MCF 10A (cell line): ENCODE measurements at regions of chr3 and their contacts with region 1.

Region 1: DNA sequence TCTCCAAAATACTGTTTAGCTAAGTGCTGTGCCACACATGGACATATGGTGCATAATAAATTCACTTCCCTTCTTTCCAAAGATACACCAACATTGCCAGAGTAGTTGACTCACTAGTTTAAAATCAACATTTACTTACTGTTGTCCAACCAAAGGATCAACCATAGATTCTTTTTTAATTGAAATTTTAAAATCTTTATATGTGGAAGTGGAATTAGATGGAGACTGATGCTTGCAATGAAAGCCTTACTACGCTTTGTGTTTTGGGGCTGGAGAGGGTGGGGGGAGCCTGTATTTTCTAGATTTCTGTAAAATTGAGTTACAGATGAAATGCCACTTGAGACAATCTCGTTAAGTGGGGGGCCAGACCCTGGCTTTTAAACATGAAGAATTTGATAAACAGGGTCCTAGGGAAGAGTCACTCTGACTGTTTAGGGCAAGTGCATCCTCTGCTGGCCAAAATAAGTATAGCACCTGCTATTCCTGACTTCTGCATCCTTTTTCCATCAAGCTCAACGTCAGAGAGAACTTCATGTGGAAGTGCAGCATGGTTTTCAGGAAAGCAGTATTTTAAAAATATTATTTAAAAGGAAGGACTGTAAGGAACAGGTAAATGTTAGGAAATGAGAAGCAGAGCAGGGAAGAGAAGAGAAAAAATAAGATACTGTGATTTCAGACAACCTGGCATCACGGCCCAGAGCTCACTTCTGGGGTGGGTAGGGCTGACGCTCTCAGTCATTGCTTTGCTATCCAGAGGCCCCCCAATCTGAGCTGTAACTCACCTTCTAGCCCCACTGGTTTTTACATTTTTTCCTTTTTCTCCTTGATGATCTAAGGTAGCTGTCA is 76.7 kb downstream of the BOC start:
- DNase-seq: peak; percentile 73
- H3K4me3 Mint-ChIP-seq: no peak overlapping the region
- H3K27ac Mint-ChIP-seq: no peak overlapping the region
- H3K4me1 Mint-ChIP-seq: peaks cover 9% of the 10 kb centered on the region
- H3K27me3 Mint-ChIP-seq: no peaks in the 10 kb centered on the region
- CTCF ChIP-seq: peak; percentile 97

Region 2: GRCh38 chr3:112871735-112872134 is 416.3 kb before region 1 on chr3:
- CTCF ChIA-PET with region 1: no interaction called
- POLR2A ChIA-PET with region 1: no interaction called
- intact Hi-C with region 1: no loop called
- DNase-seq: no peak
- H3K4me3 Mint-ChIP-seq: no peak overlapping the region
- H3K27ac Mint-ChIP-seq: no peak overlapping the region
- H3K4me1 Mint-ChIP-seq: no peaks in the 10 kb centered on the region
- H3K27me3 Mint-ChIP-seq: peaks cover 24% of the 10 kb centered on the region
- CTCF ChIP-seq: no peak

Region 3: GRCh38 chr3:113051302-113051711 is 236.7 kb before region 1 on chr3:
- CTCF ChIA-PET with region 1: interaction called, 104 read pairs
- POLR2A ChIA-PET with region 1: interaction called, 4 read pairs
- intact Hi-C with region 1: loop called (anchors 1 kb)
- DNase-seq: peak; percentile 80
- H3K4me3 Mint-ChIP-seq: no peak overlapping the region
- H3K27ac Mint-ChIP-seq: no peak overlapping the region
- H3K4me1 Mint-ChIP-seq: no peaks in the 10 kb centered on the region
- H3K27me3 Mint-ChIP-seq: no peaks in the 10 kb centered on the region
- CTCF ChIP-seq: peak; percentile 85

Region 4: GRCh38 chr3:113136071-113136470 is 152.0 kb before region 1 on chr3:
- CTCF ChIA-PET with region 1: interaction called, 82 read pairs
- POLR2A ChIA-PET with region 1: interaction called, 3 read pairs
- intact Hi-C with region 1: loop called (anchors 1 kb)
- DNase-seq: peak; percentile 53
- H3K4me3 Mint-ChIP-seq: no peak overlapping the region
- H3K27ac Mint-ChIP-seq: no peak overlapping the region
- H3K4me1 Mint-ChIP-seq: no peaks in the 10 kb centered on the region
- H3K27me3 Mint-ChIP-seq: no peaks in the 10 kb centered on the region
- CTCF ChIP-seq: peak; percentile 32

Region 5: DNA sequence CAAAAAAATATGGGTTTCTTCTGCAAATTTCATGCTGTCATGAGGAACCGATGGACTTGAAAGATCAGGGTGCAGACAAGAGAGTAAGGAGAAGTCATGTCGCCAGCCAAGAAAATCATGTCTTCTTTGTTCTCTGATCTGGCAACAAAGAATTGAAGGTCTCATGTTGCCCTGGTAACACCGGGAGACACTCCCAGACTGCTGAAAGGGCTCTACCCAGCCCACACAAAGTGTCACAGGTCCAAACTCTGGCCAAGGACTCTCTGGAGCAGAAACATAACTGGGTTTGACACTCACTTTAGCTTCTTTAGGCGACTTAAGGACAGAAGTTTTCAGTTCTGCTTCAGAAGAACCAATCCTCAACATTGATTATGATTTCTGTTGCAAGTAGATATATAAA is 287.2 kb after region 1 on chr3:
- CTCF ChIA-PET with region 1: interaction called, 3 read pairs
- POLR2A ChIA-PET with region 1: no interaction called
- intact Hi-C with region 1: loop called (anchors 5 kb)
- DNase-seq: no peak
- H3K4me3 Mint-ChIP-seq: no peak overlapping the region
- H3K27ac Mint-ChIP-seq: no peak overlapping the region
- H3K4me1 Mint-ChIP-seq: no peaks in the 10 kb centered on the region
- H3K27me3 Mint-ChIP-seq: peaks cover 27% of the 10 kb centered on the region
- CTCF ChIP-seq: no peak

Region 6: DNA sequence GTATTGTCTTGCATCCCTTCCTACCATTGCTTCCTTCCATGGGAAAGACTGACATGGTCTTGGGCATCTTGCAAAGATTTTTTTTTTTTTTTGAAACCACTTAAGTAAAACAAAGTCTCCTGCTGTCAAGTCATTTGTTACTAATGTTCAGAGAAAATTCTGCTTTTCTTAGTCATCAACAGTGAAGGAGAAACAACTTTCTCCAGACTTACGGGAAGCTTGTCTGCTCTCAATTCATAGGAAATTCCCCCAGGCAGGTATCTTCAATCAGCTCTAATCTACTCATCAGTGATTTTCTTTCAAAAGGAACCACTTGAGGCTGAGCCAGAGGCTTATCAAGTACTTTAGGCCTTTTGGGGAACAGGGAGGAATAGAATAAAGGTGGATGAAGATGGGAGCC is 906.7 kb after region 1 on chr3:
- CTCF ChIA-PET with region 1: no interaction called
- POLR2A ChIA-PET with region 1: no interaction called
- intact Hi-C with region 1: no loop called
- DNase-seq: no peak
- H3K4me3 Mint-ChIP-seq: no peak overlapping the region
- H3K27ac Mint-ChIP-seq: no peak overlapping the region
- H3K4me1 Mint-ChIP-seq: no peaks in the 10 kb centered on the region
- H3K27me3 Mint-ChIP-seq: peaks cover 11% of the 10 kb centered on the region
- CTCF ChIP-seq: no peak